Activated T-helper 1 cell treated with anti-CD3 and anti-CD28 coated beads, Interleukin-12 subunit alpha, Interleukin-12 subunit beta, Interleukin-2, Interleukin-4 antibody, amounts not matched to agents 30 ng/mL and 10 ng/mL and 1 ng/mL, durations not matched to agents 14 hours and 24 hours and 36 hours (primary cell): ENCODE measurements at regions of chr4 and their contacts with region 1.

Region 1: DNA sequence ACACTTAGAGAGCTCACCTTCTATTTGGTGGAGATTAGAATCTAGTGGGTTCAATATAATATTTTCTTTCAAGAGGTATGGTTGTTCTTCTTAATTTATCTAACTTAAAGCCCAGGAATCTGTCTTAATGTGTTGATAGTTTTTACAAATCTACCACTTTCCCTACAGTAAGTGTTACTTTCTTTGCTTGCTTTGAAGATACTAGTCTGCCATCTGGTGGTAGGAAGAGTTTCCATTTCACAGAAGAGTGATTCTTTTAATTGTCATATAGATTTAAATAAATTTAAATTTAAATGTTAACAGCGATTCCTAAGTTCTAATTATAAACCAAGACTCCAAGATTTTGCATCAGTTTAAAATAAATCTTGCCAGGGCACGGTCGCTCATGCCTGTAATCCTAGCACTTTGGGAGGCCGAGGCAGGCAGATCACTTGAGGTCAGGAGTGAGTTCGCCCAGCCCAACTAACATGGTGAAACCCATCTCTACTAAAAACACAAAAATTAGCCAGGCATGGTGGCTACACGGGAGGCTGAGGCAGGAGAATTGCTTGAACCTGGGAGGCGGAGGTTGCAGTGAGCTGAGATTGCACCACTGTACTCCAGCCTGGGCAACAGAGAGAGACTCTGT is 43.5 kb downstream of the NUDT9 start:
- DNase-seq: no peak
- H3K4me3 Mint-ChIP-seq: no peak overlapping the region
- H3K27ac Mint-ChIP-seq: no peak overlapping the region
- H3K4me1 Mint-ChIP-seq: no peaks in the 10 kb centered on the region
- H3K27me3 Mint-ChIP-seq: no peaks in the 10 kb centered on the region

Region 2: DNA sequence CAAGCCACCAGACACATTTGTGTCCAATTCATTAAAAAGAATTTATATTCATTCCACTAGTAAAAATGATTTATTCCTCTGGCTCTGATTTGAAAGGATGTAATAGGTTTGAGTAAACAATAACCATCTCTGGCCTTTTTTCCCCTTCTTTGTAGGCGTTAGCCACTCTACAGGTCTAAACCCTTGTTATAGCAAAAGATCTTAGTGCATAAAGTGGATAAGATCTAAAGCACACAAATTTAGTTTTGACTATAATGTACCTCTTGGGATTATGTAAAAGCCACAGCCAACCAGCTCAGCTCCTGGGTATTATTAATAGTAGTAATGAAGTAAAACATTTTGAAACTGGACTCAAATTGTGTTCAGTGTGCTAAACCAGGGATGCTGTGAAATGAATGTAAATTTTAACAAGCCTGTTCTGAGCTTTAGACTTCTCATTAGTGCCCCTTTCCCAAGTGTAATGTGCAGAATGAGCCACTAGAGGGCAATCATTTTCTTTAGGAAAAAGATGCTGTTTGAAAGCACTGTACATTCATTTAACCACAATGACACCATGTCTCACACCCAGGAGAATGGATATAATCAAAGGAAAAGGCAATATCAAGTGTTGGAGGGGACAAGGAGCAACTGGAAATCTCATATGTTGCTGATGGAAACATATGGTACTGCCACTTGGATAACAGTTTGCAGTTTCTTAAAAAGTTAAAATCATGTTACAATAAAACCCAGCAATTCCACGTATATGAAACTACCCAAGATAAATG is 315.2 kb before region 1 on chr4:
- intact Hi-C with region 1: loop called (anchors 1 kb)
- DNase-seq: peak; percentile 37
- H3K4me3 Mint-ChIP-seq: no peak overlapping the region
- H3K27ac Mint-ChIP-seq: no peak overlapping the region
- H3K4me1 Mint-ChIP-seq: peaks cover 7% of the 10 kb centered on the region
- H3K27me3 Mint-ChIP-seq: no peaks in the 10 kb centered on the region

Region 3: DNA sequence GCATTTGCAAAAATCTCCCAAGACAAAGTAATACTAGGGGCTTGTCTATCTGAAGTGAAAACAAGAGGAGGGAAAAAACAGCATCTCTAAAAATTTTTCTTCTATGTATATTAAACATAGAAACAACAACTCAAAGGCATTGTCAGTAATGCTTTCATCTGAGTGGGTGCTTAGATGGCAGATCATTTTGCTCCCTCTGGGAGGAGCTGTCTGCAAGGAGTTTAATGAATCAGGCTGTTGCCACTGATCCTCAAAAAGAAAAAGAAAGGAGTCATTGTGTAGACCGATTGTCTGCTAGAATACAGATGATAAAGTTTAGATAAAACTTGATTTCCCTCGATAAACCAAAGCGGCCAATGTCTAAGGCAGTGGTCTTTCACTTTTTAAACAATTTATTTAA is 195.7 kb before region 1 on chr4:
- intact Hi-C with region 1: loop called (anchors 1 kb)
- DNase-seq: no peak
- H3K4me3 Mint-ChIP-seq: no peak overlapping the region
- H3K27ac Mint-ChIP-seq: no peak overlapping the region
- H3K4me1 Mint-ChIP-seq: no peaks in the 10 kb centered on the region
- H3K27me3 Mint-ChIP-seq: peaks cover 5% of the 10 kb centered on the region

Region 4: DNA sequence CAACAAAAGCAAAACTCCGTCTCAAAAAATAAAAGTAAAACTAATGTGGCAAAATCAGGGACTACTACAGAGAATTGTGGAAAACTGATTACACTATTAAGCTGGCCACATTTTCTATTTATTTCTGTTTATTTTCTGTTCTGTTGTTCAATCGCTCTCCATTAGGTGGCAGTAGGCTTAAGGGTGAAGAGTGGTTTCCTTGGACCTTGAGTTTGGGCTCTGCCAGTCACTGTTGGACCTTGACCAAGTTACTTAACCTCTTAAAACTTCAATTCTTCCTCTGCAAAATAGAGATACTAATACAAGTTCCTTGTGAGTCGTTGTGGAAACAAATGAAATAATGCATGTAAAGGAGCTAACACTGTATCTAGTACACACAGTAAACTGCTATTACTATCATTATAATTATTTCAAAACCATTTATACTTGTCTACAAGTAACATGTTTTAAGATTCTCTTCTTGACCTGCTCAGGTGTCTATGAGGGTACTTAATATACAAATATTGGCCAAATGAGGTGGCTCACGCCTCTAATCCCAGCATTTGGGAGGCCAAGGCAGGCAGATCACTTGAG is 90.0 kb before region 1 on chr4:
- intact Hi-C with region 1: loop called (anchors 1 kb)
- DNase-seq: no peak
- H3K4me3 Mint-ChIP-seq: no peak overlapping the region
- H3K27ac Mint-ChIP-seq: no peak overlapping the region
- H3K4me1 Mint-ChIP-seq: no peaks in the 10 kb centered on the region
- H3K27me3 Mint-ChIP-seq: no peaks in the 10 kb centered on the region

Region 5: GRCh38 chr4:87422104-87423052 is 43.5 kb before region 1 on chr4 and contains the start of gene NUDT9:
- intact Hi-C with region 1: loop called (anchors 1 kb)
- DNase-seq: peak; percentile 79
- H3K4me3 Mint-ChIP-seq: peak within 1 kb of the TSS; percentile 99
- H3K27ac Mint-ChIP-seq: peak within 1 kb of the TSS; percentile 95
- H3K4me1 Mint-ChIP-seq: peaks cover 30% of the 10 kb centered on the region
- H3K27me3 Mint-ChIP-seq: peaks cover 5% of the 10 kb centered on the region
- total RNA-seq, gene NUDT9: 13.9 and 14.6 TPM in 2 replicates